ENCODE measurements at regions of chr15 and their contacts with region 1.

Region 1: DNA sequence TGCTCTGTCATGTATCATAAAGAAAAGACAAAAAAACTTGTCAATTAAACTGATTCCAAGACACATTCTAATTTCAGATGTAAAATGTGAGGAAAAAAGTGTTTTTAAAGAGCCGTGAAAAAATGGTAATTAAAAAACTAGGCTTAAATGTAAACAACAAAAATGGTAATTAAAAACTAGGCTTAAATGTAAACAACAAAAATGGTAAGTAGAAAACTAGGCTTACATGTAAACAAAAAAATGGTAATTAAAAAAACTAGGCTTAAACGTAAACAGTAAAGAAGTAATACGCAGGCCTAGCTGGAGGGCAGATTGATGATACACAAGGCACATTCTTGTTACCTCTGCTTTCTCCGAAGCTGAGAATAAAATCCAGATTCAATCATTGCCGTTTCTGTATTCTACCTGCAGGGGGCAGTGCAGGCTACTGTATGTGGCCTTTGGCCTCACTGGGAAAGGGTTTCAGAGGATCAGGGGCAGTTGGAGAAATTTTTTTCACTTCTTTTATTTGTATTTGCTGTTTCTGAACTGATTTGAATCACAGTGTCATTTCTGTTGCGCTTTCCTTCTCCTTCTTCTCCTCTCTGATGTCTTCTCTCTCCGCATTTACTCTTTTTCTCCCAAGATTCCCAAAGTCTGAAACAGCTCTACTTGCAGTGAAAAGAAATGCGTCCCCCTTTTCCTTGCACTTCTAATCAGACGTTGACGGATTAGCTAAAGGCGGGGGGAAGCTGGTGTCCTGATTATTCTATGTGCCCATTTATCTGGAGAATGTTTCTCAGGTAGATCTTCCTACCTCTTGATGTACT is 67.2 kb upstream of the MCTP2 start:
- DNase-seq: peak; percentile 53
- ATAC-seq: peak; percentile 76
- H3K4me3 ChIP-seq: no peak overlapping the region
- H3K27ac ChIP-seq: no peak overlapping the region
- H3K4me1 ChIP-seq: no peaks in the 10 kb centered on the region
- H3K27me3 ChIP-seq: no peaks in the 10 kb centered on the region
- CTCF ChIP-seq: peak; percentile 82
- EP300 ChIP-seq: no peak
- POLR2A ChIP-seq: no peak
- RAD21 ChIP-seq: peak; percentile 61

Region 2: GRCh38 chr15:93102211-93102610 is 1062.0 kb before region 1 on chr15:
- CTCF ChIA-PET with region 1: no interaction called
- POLR2A ChIA-PET with region 1: no interaction called
- in situ Hi-C with region 1: no loop called
- intact Hi-C with region 1: loop called (anchors 5 kb)
- DNase-seq: no peak
- ATAC-seq: no peak
- H3K4me3 ChIP-seq: no peak overlapping the region
- H3K27ac ChIP-seq: no peak overlapping the region
- H3K4me1 ChIP-seq: no peaks in the 10 kb centered on the region
- H3K27me3 ChIP-seq: no peaks in the 10 kb centered on the region; a peak in 2 of 5 replicates
- CTCF ChIP-seq: no peak
- EP300 ChIP-seq: no peak
- POLR2A ChIP-seq: no peak
- RAD21 ChIP-seq: no peak

Region 3: GRCh38 chr15:94230956-94231722 is 66.9 kb after region 1 on chr15 and contains the start of gene MCTP2:
- CTCF ChIA-PET with region 1: no interaction called
- POLR2A ChIA-PET with region 1: no interaction called
- in situ Hi-C with region 1: no loop called
- intact Hi-C with region 1: loop called (anchors 2 kb)
- DNase-seq: peak; percentile 62
- ATAC-seq: peak; percentile 96
- H3K4me3 ChIP-seq: peak within 1 kb of the TSS; percentile 68 to 74 (median 69)
- H3K27ac ChIP-seq: peak within 1 kb of the TSS; percentile 24
- H3K4me1 ChIP-seq: peaks cover 6% of the 10 kb centered on the region; the same call in 1 of the 2 replicates
- H3K27me3 ChIP-seq: no peaks in the 10 kb centered on the region; a peak in 1 of 5 replicates
- CTCF ChIP-seq: peak; percentile 41
- EP300 ChIP-seq: no peak
- POLR2A ChIP-seq: peak; percentile 17 to 52; a peak in 2 of 4 replicates
- RAD21 ChIP-seq: no peak
- total RNA-seq, gene MCTP2: 2.7 and 5.1 TPM in 2 replicates

Region 4: GRCh38 chr15:94324117-94324826 is 160.1 kb after region 1 on chr15:
- CTCF ChIA-PET with region 1: interaction called, 61 read pairs
- POLR2A ChIA-PET with region 1: no interaction called
- in situ Hi-C with region 1: loop called (anchors 5 kb)
- intact Hi-C with region 1: loop called (anchors 1 kb)
- DNase-seq: peak; percentile 34
- ATAC-seq: peak; percentile 95
- H3K4me3 ChIP-seq: no peak overlapping the region
- H3K27ac ChIP-seq: no peak overlapping the region
- H3K4me1 ChIP-seq: no peaks in the 10 kb centered on the region; the same call in 1 of the 2 replicates
- H3K27me3 ChIP-seq: no peaks in the 10 kb centered on the region
- CTCF ChIP-seq: peak; percentile 93
- EP300 ChIP-seq: no peak
- POLR2A ChIP-seq: no peak
- RAD21 ChIP-seq: peak; percentile 89

Region 5: DNA sequence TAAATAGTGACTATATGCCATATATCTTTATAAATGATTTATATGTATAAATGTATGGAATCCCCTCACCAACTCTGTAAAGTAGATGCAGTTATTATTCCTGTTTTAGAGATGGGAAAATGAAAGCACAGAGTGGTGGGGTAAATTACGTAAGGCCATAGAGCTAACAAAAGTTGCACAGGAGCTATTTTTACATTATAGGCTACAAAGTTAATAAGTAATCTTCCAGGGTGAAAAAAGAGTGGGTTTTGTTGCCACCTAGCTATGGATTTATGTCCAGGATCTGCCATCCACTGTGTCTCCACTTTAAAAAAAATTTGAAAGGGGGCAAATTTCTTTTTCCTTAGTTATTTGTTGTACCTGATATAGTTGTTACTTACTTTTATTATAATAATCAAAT is 302.8 kb after region 1 on chr15:
- CTCF ChIA-PET with region 1: no interaction called
- POLR2A ChIA-PET with region 1: no interaction called
- in situ Hi-C with region 1: loop called (anchors 10 kb)
- intact Hi-C with region 1: no loop called
- DNase-seq: peak; percentile 61
- ATAC-seq: peak; percentile 68
- H3K4me3 ChIP-seq: no peak overlapping the region; a peak in 1 of 6 replicates
- H3K27ac ChIP-seq: no peak overlapping the region
- H3K4me1 ChIP-seq: no peaks in the 10 kb centered on the region
- H3K27me3 ChIP-seq: no peaks in the 10 kb centered on the region
- CTCF ChIP-seq: peak; percentile 29; the same call in 1 of the 2 replicates
- EP300 ChIP-seq: no peak
- POLR2A ChIP-seq: no peak
- RAD21 ChIP-seq: no peak

Region 6: DNA sequence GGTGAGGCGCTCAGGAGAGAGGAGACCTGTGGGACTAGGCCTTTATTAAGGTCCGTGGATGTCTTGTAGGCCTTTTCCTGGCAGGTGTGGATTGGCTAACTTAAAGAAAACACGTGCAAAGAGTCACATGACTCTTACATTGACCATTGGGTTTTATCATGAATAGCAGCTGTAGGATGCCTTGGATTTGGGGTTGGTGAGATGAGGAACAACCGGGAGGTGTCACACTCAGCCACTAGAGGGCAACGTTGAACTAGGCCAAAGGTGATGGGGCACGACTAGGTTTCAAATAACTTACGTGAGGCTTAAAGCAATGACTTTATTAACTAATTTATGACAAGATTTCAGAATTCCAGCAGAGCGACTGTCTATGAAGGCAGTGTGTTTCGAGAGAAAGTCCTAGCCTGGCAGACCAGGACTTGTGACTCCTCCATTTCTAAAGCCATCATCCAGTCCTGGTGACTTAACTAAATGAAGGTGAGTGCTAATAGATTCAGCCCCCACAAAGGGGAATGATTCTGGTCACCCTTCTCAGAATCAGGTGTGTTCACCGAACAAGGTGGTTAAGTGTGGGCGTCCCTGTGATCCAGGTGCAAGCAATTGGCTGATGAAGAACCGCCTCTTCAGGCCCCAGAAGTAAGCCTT is 412.8 kb after region 1 on chr15:
- CTCF ChIA-PET with region 1: no interaction called
- POLR2A ChIA-PET with region 1: no interaction called
- in situ Hi-C with region 1: no loop called
- intact Hi-C with region 1: loop called (anchors 5 kb)
- DNase-seq: peak; percentile 20
- ATAC-seq: peak; percentile 71
- H3K4me3 ChIP-seq: no peak overlapping the region
- H3K27ac ChIP-seq: no peak overlapping the region
- H3K4me1 ChIP-seq: no peaks in the 10 kb centered on the region
- H3K27me3 ChIP-seq: no peaks in the 10 kb centered on the region
- CTCF ChIP-seq: peak; percentile 53
- EP300 ChIP-seq: no peak
- POLR2A ChIP-seq: no peak
- RAD21 ChIP-seq: no peak